Activated naive CD8-positive, alpha-beta T cell treated with anti-CD3 and anti-CD28 coated beads, Interleukin-2, amount 10 ng/mL, durations not matched to agents 7 days and 5 days (primary cell): ENCODE measurements at regions of chr7 and their contacts with region 1.

Region 1: GRCh38 chr7:100538654-100539435 is at the start of gene AGFG2:
- DNase-seq: peak; percentile 99
- ATAC-seq: peak; percentile 97
- H3K4me3 Mint-ChIP-seq: peak within 1 kb of the TSS; percentile 100
- H3K27ac Mint-ChIP-seq: peak within 1 kb of the TSS; percentile 98
- H3K4me1 Mint-ChIP-seq: peaks cover 34% of the 10 kb centered on the region
- H3K27me3 Mint-ChIP-seq: no peaks in the 10 kb centered on the region
- total RNA-seq, gene AGFG2: 51.6 to 54.7 TPM

Region 2: GRCh38 chr7:100493476-100494264 is 45.2 kb before region 1 on chr7:
- POLR2A ChIA-PET with region 1: interaction called, 10 read pairs
- DNase-seq: peak; percentile 77
- ATAC-seq: peak; percentile 91
- H3K4me3 Mint-ChIP-seq: peak overlapping the region; percentile 82
- H3K27ac Mint-ChIP-seq: peak overlapping the region; percentile 51
- H3K4me1 Mint-ChIP-seq: peaks cover 11% of the 10 kb centered on the region
- H3K27me3 Mint-ChIP-seq: peaks cover 24% of the 10 kb centered on the region

Region 3: GRCh38 chr7:100516135-100516812 is 22.6 kb before region 1 on chr7:
- POLR2A ChIA-PET with region 1: interaction called, 11 read pairs
- DNase-seq: peak; percentile 54
- ATAC-seq: peak; percentile 96
- H3K4me3 Mint-ChIP-seq: peak overlapping the region; percentile 59
- H3K27ac Mint-ChIP-seq: peak overlapping the region; percentile 65
- H3K4me1 Mint-ChIP-seq: peaks cover 21% of the 10 kb centered on the region
- H3K27me3 Mint-ChIP-seq: peaks cover 16% of the 10 kb centered on the region

Region 4: GRCh38 chr7:100753750-100754149 is 214.9 kb after region 1 on chr7:
- POLR2A ChIA-PET with region 1: no interaction called
- DNase-seq: no peak
- ATAC-seq: no peak
- H3K4me3 Mint-ChIP-seq: no peak overlapping the region
- H3K27ac Mint-ChIP-seq: no peak overlapping the region
- H3K4me1 Mint-ChIP-seq: no peaks in the 10 kb centered on the region
- H3K27me3 Mint-ChIP-seq: peaks cover 25% of the 10 kb centered on the region